Panc1 (cell line): ENCODE measurements at regions of chr12 and their contacts with region 1.

Region 1: GRCh38 chr12:53295070-53295890 is at the start of gene PFDN5:
- DNase-seq: peak; percentile 85
- ATAC-seq: peak; percentile 90
- H3K4me3 ChIP-seq: peak within 1 kb of the TSS; percentile 69 to 95
- H3K27ac ChIP-seq: peak within 1 kb of the TSS; percentile 95
- H3K4me1 ChIP-seq: peaks cover 33% of the 10 kb centered on the region
- H3K27me3 ChIP-seq: no peaks in the 10 kb centered on the region
- CTCF ChIP-seq: no peak
- total RNA-seq, gene PFDN5: 340 TPM

Region 2: GRCh38 chr12:53279283-53279869 is 15.9 kb before region 1 on chr12:
- CTCF ChIA-PET with region 1: interaction called, 3 read pairs
- POLR2A ChIA-PET with region 1: interaction called, 17 read pairs
- in situ Hi-C with region 1: no loop called
- intact Hi-C with region 1: no loop called
- DNase-seq: no peak
- ATAC-seq: no peak
- H3K4me3 ChIP-seq: no peak overlapping the region
- H3K27ac ChIP-seq: no peak overlapping the region
- H3K4me1 ChIP-seq: no peaks in the 10 kb centered on the region
- H3K27me3 ChIP-seq: no peaks in the 10 kb centered on the region
- CTCF ChIP-seq: no peak